HCT116 (cell line): ENCODE measurements at regions of chr19 and their contacts with region 1.

Region 1: DNA sequence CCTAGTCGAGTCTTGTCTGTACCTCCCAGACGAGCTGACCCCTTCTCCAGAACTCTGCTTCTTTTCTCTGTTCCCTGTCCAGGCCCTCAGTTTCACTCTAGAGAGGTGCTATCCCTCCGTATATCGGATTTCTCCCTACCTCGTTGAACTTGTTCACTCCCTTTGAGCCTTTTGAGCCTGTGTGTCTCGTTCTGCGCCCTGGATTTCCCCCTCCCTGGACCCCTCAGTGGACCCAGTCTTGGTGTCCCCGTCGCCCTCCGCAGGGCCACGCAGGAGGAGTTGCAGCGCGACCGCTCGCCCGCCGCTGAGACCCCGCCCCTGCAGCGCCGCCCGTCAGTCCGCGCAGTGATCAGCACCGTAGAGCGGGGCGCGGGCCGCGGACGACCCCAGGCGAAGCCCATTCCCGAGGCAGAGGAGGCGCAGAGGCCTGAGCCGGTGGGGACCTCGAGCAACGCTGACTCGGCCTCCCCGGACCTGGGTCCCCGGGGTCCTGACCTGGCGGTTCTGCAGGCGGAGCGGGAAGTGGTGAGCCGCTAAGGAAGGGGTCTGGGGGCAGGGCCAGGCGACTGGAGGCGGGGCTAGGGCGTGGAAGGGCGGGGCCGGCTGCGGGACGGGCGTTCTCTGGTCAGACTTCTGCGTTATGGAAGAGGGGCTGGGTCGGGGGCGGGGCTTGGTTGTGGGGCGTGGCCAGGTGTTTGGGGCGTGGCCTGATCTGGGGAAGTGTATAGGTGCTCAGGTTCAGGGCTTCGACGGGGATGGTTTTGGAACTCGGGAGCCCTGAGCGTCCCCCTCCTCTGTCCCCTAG is 5.5 kb downstream of the EPS8L1 start:
- DNase-seq: peak; percentile 86
- ATAC-seq: peak; percentile 77
- H3K4me3 ChIP-seq: peak overlapping the region; percentile 63 to 69
- H3K27ac ChIP-seq: peak overlapping the region; percentile 92
- H3K4me1 ChIP-seq: peaks cover 8 to 45% of the 10 kb centered on the region in 2 experiments
- H3K27me3 ChIP-seq: no peaks in the 10 kb centered on the region
- CTCF ChIP-seq: no peak
- POLR2A ChIP-seq: no peak
- RAD21 ChIP-seq: no peak

Region 2: DNA sequence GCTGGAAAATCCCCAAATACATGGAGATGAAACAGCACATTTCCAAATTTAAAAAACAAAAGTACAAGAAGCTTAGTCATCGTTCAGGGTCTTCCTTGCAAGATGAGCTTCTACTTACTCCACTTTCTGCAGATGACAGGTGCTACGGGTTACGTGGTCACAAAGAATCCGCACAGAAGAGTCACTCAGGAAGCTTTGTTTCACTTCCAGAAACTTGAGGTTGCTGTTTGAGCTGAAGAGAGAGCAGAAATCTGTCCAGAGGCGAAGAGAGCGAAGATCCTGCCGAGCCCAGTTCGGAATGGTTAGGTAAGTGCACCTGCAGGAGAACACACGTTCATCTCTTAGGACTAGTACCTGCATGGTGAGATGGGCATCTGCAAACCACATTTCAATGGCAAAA is 143.2 kb before region 1 on chr19:
- CTCF ChIA-PET with region 1: no interaction called
- POLR2A ChIA-PET with region 1: no interaction called
- RAD21 ChIA-PET with region 1: no interaction called
- intact Hi-C with region 1: no loop called
- DNase-seq: no peak
- ATAC-seq: no peak
- H3K4me3 ChIP-seq: no peak overlapping the region
- H3K27ac ChIP-seq: no peak overlapping the region
- H3K4me1 ChIP-seq: no peaks in the 10 kb centered on the region
- H3K27me3 ChIP-seq: peaks cover 3% of the 10 kb centered on the region; the same call in 1 of the 2 replicates
- CTCF ChIP-seq: no peak
- POLR2A ChIP-seq: no peak
- RAD21 ChIP-seq: no peak

Region 3: GRCh38 chr19:55095234-55096060 is 14.3 kb after region 1 on chr19:
- CTCF ChIA-PET with region 1: no interaction called
- POLR2A ChIA-PET with region 1: no interaction called
- RAD21 ChIA-PET with region 1: no interaction called
- intact Hi-C with region 1: no loop called
- DNase-seq: no peak
- ATAC-seq: peak; percentile 52
- H3K4me3 ChIP-seq: no peak overlapping the region
- H3K27ac ChIP-seq: no peak overlapping the region; the same call in 1 of the 2 replicates
- H3K4me1 ChIP-seq: no peaks in the 10 kb centered on the region
- H3K27me3 ChIP-seq: no peaks in the 10 kb centered on the region
- CTCF ChIP-seq: no peak
- POLR2A ChIP-seq: no peak
- RAD21 ChIP-seq: no peak

Region 4: DNA sequence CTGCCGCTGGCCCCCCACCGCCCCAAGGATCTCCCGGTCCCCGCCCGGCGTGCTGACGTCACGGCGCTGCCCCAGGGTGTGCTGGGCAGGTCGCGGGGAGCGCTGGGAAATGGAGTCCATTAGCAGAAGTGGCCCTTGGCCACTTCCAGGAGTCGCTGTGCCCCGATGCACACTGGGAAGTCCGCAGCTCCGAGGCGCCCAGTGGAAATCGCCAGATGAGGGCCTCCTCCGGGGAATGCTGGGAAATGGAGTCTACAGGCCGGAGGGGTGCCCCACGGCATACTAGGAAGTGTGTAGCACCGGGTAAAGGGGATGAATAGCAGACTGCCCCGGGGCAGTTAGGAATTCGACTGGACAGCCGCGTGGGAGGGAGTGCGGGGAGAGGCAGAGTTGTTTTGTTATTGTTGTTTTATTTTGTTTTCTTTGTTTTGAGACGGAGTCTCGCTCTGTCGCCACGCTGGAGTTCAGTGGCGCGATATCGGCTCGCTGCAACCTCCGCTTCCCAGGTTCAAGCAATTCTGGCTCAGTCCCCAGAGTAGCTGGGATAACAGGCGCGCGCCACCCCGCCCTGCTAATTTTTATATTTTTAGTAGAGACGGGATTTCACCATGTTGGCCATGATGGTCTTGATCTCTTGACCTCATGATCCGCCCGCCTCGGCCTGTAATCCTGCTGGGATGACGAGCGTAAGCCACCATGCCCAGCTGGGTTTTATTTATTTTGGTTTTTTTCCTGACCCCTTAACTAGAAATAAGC is 36.6 kb after region 1 on chr19 and contains the start of gene PPP1R12C:
- CTCF ChIA-PET with region 1: no interaction called
- POLR2A ChIA-PET with region 1: interaction called, 10 read pairs
- RAD21 ChIA-PET with region 1: no interaction called
- intact Hi-C with region 1: loop called (anchors 2 kb)
- DNase-seq: peak; percentile 96
- ATAC-seq: peak; percentile 92
- H3K4me3 ChIP-seq: peak within 1 kb of the TSS; percentile 84 to 99
- H3K27ac ChIP-seq: peak within 1 kb of the TSS; percentile 90
- H3K4me1 ChIP-seq: peaks cover 12 to 27% of the 10 kb centered on the region in 2 experiments
- H3K27me3 ChIP-seq: no peaks in the 10 kb centered on the region
- CTCF ChIP-seq: no peak
- POLR2A ChIP-seq: peak; percentile 44
- RAD21 ChIP-seq: no peak
- total RNA-seq, gene PPP1R12C: 83.2 TPM

Region 5: DNA sequence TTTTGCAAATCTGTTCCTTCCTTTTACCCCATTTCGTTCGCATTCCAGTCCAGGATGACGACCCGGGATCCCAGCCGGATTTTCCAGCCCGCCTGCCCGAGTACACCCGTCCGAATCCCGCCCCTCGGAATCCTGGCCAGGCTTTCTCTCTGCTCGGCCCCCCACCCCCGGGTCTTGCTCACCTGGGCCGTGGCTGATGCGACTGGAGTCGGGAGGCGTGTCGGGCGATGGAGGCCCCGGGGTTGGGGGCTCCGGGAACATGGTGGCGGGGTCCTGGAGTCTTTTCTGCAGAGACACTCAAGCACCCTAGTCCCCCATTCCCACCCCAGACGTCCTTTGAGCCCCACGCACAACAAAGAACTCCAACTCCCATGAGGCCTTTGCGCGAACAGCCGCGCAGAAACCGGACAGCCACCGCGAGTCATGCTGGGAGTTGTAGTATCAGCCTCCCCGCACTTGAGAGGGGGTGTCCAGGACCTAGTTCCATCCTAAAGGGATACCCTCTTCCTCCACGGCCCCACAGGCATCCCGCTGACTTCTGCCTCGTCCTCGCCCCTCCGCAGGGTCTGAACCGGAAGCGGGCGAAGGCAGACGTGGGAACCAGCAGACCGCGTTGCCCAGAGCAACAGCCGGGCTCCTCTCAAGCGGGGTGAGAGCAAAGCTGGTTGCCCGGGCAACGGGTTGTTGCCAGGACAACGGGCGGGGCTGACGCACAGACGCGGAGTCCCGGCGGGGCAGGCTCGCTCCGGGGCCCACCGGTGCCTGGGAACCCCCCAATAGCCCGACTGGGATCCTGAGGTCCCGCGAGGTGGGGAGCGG is 97.8 kb after region 1 on chr19:
- CTCF ChIA-PET with region 1: no interaction called
- POLR2A ChIA-PET with region 1: no interaction called
- RAD21 ChIA-PET with region 1: no interaction called
- intact Hi-C with region 1: no loop called
- DNase-seq: peak; percentile 69
- ATAC-seq: peak; percentile 71
- H3K4me3 ChIP-seq: peak overlapping the region; percentile 22 to 40
- H3K27ac ChIP-seq: 0 out of 2 replicates have a peak overlapping the region, but pooled peaks have one; percentile 12
- H3K4me1 ChIP-seq: peaks cover 13 to 43% of the 10 kb centered on the region in 2 experiments; a peak in 3 of 4 replicates
- H3K27me3 ChIP-seq: no peaks in the 10 kb centered on the region
- CTCF ChIP-seq: no peak
- POLR2A ChIP-seq: no peak
- RAD21 ChIP-seq: no peak

Region 6: GRCh38 chr19:55241143-55242088 is 160.2 kb after region 1 on chr19:
- CTCF ChIA-PET with region 1: no interaction called
- POLR2A ChIA-PET with region 1: no interaction called
- RAD21 ChIA-PET with region 1: no interaction called
- intact Hi-C with region 1: no loop called
- DNase-seq: no peak
- ATAC-seq: no peak
- H3K4me3 ChIP-seq: no peak overlapping the region
- H3K27ac ChIP-seq: no peak overlapping the region
- H3K4me1 ChIP-seq: no peaks in the 10 kb centered on the region
- H3K27me3 ChIP-seq: no peaks in the 10 kb centered on the region
- CTCF ChIP-seq: no peak
- POLR2A ChIP-seq: no peak
- RAD21 ChIP-seq: no peak